ENCODE measurements at regions of chr3 and their contacts with region 1.

Region 1: DNA sequence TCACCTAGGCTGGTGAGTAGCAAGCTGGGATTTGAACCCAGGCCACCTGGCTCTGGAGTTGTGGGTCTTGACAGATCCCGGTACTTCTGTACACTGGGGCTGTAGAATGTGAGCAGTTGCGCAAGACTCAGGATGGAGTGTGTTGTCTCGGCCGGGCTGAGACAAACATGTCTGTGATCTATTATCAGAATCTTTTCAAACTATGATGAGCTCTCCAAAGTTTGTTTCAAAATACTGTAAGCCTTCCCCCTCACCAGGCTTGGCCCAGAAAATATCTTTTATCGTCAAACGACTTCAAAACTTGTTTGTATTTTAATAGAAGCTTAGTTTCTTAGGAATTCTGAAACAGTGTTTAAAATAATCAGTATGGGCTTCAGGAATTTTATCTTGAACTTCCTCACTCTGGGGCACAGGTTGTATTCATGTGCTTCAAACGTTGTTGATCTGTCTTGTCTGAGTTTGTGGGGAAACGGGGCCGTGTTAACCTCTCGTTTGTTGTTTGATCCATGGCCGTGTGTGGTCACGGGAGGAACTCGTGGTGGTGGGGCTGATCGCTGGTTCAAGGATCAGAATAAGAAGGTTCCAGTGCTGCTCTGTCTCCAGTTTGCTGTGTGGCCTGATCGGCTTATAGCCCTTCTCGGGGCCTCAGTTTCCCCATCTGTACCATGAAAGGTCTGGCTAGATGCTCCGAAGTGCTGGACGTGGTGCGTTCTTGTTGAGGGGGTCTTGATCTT is 40.3 kb upstream of the TFRC start:
- DNase-seq: peak in 3 of 4 experiments; percentile 36 to 74 (median 42)
- ATAC-seq: peak; percentile 69
- H3K4me3 ChIP-seq: no peak overlapping the region
- H3K27ac ChIP-seq: peak overlapping the region; percentile 71
- H3K4me1 ChIP-seq: peaks cover 28 to 36% of the 10 kb centered on the region in 2 experiments
- H3K27me3 ChIP-seq: no peaks in the 10 kb centered on the region
- CTCF ChIP-seq: no peak
- EP300 ChIP-seq: 0 out of 2 replicates have a peak, but pooled peaks have one; percentile 37
- POLR2A ChIP-seq: no peak
- RAD21 ChIP-seq: no peak

Region 2: DNA sequence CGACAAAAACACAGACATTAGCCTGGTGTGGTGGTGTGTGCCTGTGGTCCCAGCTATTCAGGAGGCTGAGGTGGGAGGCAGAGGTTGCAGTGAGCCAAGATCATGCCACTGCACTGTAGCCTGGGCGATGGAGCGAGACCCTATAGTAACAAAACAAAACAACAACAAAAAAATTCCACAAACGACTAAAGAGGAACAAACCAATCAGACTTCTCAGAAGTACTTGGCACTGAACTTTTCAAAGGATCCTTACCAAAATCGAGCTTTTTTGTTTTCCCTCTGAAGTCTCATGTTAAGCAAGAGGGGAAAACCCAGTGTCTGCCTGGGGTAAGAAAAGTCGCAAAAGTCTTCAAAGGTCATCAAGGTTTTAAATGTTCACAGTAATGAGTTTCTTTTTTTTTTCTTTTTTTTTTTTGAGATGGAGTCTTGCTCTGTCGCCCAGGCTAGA is 10.2 kb before region 1 on chr3:
- CTCF ChIA-PET with region 1: no interaction called
- POLR2A ChIA-PET with region 1: interaction called, 18 read pairs
- in situ Hi-C with region 1: no loop called
- intact Hi-C with region 1: no loop called
- DNase-seq: no peak
- ATAC-seq: no peak
- H3K4me3 ChIP-seq: no peak overlapping the region
- H3K27ac ChIP-seq: 0 out of 3 replicates have a peak overlapping the region, but pooled peaks have one; percentile 18
- H3K4me1 ChIP-seq: peaks cover 22 to 42% of the 10 kb centered on the region in 2 experiments; a peak in 4 of 5 replicates
- H3K27me3 ChIP-seq: no peaks in the 10 kb centered on the region
- CTCF ChIP-seq: no peak
- EP300 ChIP-seq: no peak
- POLR2A ChIP-seq: no peak
- RAD21 ChIP-seq: no peak